Naive thymus-derived CD8-positive, alpha-beta T cell (primary cell): ENCODE measurements at regions of chr20 and their contacts with region 1.

Region 1: DNA sequence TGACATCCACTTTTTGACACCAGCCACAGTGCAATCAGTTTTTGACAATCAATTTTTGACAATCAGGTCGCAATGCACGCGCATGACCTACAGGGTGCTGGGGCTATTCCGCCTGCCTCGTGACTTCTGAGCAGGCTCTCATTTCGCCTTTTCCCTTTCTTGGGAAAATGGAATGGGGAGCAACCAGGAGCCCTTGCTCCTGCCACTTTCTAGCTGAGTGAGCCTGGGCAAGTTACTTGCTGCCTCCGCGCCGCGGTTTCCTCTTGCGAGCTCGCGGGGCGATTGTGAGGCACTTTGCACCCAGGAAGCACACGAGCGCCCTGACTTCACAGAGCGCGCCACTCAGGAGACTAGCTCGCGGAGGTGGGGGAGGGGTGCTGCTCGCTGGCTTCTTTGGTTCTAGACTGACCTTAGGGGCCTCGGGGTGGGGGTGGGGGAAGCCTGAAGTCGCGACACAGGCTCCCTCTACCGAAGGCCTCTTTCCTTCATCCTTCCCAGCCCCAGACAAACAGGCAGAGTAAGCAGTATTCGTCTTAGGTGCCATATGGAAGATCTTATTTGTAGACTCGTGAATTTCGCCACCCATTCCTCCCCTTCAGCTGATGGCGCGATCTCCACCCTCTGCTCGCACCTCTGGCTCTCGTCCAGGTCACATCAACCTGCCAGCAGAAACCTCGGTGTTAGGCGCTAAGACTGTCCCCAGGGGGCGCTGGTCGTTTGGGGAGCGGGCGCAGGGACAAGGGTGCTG is 4.6 kb downstream of the TP53TG5 start:
- DNase-seq: peak; percentile 83 to 94 (median 88)
- ATAC-seq: peak; percentile 89 to 90
- H3K4me3 Mint-ChIP-seq: peak overlapping the region; percentile 86 to 96 (median 90)
- H3K27ac Mint-ChIP-seq: peak overlapping the region; percentile 79 to 98 (median 96)
- H3K4me1 Mint-ChIP-seq: peaks cover 10 to 46% (median 39%) of the 10 kb centered on the region in 4 donors
- H3K27me3 Mint-ChIP-seq: no peaks in the 10 kb centered on the region

Region 2: DNA sequence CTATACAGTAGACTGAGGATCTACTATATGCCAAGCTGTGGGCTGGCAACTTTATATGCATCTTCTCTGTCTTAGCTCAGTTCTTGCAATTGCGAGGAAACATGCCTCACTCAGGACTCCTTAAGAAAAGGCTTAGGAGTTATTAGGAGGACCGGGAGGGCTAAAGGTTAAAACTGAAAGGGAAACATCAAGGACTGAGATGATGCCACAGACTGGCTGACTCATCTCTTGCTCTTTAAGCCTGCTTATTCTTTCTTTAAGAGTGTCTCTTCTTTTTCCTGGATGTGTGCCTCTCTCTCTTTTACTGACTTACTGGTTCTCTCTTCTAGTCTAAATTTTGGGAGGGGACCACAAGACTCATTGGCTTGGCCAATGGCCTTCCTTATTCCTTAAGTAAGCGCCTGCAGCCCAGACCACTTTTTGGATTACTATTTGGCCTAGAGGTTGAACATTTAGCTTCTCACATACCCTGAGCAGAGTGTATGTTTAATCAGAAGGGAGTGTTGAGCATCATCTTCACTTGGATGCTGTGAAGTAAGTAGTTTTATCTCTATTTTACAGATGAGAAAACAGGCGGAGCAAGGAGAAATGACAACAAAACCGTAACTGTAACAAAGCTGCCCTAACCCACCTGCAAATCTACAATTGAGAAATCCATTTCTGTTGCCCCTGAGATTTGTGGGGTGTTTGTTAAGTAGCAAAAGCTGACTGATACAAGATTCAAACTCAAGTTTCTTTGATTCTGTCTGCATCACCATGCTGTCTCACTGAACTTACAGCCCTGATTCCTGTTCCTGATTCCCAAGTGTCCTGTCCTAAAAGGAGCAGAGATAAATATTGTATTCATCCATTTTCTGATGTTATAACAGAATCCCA is 18.1 kb before region 1 on chr20:
- POLR2A ChIA-PET with region 1: no interaction called
- DNase-seq: no peak
- ATAC-seq: no peak
- H3K4me3 Mint-ChIP-seq: no peak overlapping the region
- H3K27ac Mint-ChIP-seq: peak overlapping the region in 2 of 10 donors; percentile 4 to 58
- H3K4me1 Mint-ChIP-seq: peaks cover 0 to 12% (median 2%) of the 10 kb centered on the region in 4 donors
- H3K27me3 Mint-ChIP-seq: no peaks in the 10 kb centered on the region

Region 3: DNA sequence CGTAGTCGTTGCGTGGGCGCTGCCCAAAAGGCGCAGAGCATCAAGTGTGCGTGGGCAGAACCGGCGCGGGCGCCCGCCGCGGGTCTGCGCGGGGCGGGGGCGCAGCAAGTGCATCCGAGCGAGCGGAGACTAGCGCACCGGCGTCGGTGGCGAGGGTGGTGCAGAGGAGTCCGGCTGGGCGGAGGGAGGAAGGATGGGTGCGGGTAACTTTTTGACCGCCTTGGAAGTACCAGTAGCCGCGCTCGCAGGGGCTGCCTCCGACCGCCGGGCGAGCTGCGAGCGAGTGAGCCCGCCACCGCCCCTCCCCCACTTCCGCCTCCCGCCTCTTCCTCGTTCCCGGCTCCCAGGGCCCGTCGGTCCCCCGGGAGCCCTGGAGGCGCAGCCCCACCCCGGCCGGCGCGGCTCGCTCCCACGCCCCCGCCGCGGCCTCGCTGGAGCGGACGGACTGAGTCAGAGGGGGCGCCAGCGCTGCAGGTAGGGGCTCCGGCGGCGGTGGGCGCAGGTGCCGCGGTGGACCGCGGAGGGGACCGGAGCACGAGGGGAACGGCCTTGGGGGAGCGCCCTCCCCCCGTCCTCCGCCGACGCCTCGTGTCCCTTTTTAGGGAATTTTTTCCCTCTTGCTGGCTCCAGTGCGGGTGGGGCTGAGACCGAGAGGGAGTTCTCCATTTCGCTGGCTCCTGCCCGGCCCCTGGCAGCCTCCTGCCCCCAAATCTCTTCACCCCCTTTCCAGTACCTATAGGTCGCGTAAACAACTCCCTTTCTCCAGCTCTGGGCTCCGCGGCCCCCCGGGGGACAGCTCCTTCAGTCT is 32.9 kb after region 1 on chr20:
- POLR2A ChIA-PET with region 1: interaction called, 28 read pairs
- DNase-seq: peak; percentile 23 to 70 (median 45)
- ATAC-seq: peak; percentile 58 to 64
- H3K4me3 Mint-ChIP-seq: peak overlapping the region; percentile 80 to 91 (median 82)
- H3K27ac Mint-ChIP-seq: peak overlapping the region in 8 of 10 donors; percentile 79 to 93 (median 86)
- H3K4me1 Mint-ChIP-seq: peaks cover 12 to 30% (median 25%) of the 10 kb centered on the region in 4 donors
- H3K27me3 Mint-ChIP-seq: peaks cover 0 to 2% (median 0%) of the 10 kb centered on the region in 5 donors

Region 4: GRCh38 chr20:45436732-45437391 is 63.3 kb after region 1 on chr20:
- POLR2A ChIA-PET with region 1: interaction called, 40 read pairs
- DNase-seq: peak; percentile 78 to 92 (median 86)
- ATAC-seq: peak; percentile 99 to 100
- H3K4me3 Mint-ChIP-seq: peak overlapping the region; percentile 75 to 88 (median 84)
- H3K27ac Mint-ChIP-seq: peak overlapping the region; percentile 22 to 86 (median 80)
- H3K4me1 Mint-ChIP-seq: peaks cover 5 to 23% (median 15%) of the 10 kb centered on the region in 4 donors
- H3K27me3 Mint-ChIP-seq: no peaks in the 10 kb centered on the region